PC-9 (cell line): ENCODE measurements at regions of chr11 and their contacts with region 1.

Region 1: DNA sequence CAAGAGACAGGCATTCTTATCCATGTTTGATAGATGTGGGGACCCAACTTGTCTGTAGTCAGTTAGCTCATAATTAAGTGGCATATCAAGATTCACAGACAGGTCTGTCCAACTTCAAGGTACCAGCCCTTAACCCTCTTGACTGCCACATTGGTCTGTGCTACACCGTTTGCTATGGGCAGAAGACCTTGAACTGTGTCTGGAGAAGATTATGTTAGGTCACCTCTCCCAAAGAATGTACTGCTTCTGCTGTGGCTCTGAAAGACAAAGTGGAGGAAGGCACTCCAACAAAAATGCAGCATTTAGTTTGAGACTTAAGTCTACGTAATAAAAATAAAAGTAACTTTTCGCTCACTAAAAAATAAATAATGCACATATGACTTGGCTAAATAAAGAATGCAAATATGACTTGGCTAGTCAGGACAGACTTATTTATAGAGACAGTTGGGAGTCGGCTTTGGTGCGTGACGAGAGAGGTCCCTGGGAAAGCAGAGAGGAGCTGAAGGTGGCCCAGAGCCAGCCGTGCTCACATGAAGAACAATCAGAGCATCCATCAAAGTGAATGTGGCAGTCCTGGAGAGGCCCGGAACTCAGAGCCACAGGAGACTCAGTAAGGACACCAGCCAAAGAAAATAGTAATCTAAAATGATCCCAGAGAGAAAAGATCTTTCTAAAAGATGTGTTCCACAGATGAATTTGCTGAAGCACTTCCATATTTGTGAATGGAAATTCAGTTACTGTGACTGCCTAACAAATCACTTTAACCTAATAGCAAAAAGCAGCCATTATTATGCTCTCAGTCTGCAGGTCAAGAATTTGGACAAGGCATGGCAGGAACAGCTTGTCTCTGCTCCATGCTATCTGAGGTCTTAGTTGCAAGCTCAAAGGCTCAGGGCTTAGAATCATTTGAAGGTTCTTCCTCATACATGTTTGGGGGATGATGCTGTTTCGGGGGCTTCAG is 35.0 kb downstream of the CWC15 start:
- DNase-seq: no peak
- H3K4me3 ChIP-seq: no peak overlapping the region
- H3K27ac ChIP-seq: no peak overlapping the region
- H3K4me1 ChIP-seq: no peaks in the 10 kb centered on the region
- H3K27me3 ChIP-seq: no peaks in the 10 kb centered on the region
- CTCF ChIP-seq: no peak

Region 2: GRCh38 chr11:94588371-94588952 is 349.9 kb before region 1 on chr11:
- CTCF ChIA-PET with region 1: no interaction called
- POLR2A ChIA-PET with region 1: interaction called, 11 read pairs
- intact Hi-C with region 1: no loop called
- DNase-seq: peak; percentile 81 to 99
- H3K4me3 ChIP-seq: no peak overlapping the region
- H3K27ac ChIP-seq: peak overlapping the region; percentile 60
- H3K4me1 ChIP-seq: peaks cover 53% of the 10 kb centered on the region
- H3K27me3 ChIP-seq: no peaks in the 10 kb centered on the region
- CTCF ChIP-seq: no peak